Mammary epithelial cell (primary cell): ENCODE measurements at regions of chr1 and their contacts with region 1.

Region 1: DNA sequence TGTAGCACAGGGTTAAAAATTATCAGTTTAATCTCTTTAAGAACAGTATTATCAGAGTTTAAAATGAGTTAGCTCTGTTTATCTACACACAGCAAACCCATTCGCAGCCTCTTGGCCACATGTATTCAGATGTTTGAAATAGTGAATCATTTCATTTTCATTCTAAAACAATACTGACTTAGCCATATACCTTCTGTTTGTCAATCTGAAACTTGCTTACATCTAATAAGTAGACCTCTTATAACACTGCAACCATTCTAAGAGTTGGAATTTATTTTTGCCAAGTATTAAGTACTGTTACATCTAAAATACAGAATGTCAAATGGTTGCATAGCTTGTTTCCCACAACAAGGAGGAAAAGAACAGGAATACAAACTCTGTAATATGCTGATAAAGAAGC is 25.4 kb downstream of the ANGEL2 start:
- DNase-seq: no peak
- H3K4me3 ChIP-seq: no peak overlapping the region
- H3K27ac ChIP-seq: no peak overlapping the region
- H3K4me1 ChIP-seq: peaks cover 4% of the 10 kb centered on the region
- H3K27me3 ChIP-seq: no peaks in the 10 kb centered on the region
- CTCF ChIP-seq: no peak

Region 2: DNA sequence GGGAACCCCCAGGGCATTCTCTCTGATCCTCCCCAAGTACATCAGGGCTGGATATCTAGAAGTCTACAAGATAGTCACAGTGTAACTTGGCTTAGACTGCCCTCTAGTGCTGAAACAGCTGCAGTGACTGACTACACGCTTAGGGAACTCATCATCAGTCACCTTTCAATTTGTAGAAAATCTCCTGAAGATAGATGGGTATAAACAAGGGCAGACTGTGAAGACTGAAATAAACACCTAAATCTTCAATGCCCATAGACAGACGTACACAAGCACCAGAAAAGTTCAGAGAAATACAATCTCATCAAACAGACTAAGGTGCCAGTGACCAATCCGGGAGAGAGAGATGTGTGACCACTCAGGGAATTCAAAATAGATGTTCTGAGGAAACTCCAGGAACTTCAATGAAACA is 622.2 kb before region 1 on chr1:
- CTCF ChIA-PET with region 1: no interaction called
- dilution Hi-C with region 1: no loop called
- in situ Hi-C with region 1: no loop called
- intact Hi-C with region 1: loop called (anchors 5 kb)
- DNase-seq: peak; percentile 54
- H3K4me3 ChIP-seq: no peak overlapping the region
- H3K27ac ChIP-seq: no peak overlapping the region
- H3K4me1 ChIP-seq: no peaks in the 10 kb centered on the region
- H3K27me3 ChIP-seq: no peaks in the 10 kb centered on the region
- CTCF ChIP-seq: peak; percentile 90 to 96

Region 3: GRCh38 chr1:212630158-212630900 is 359.9 kb before region 1 on chr1:
- CTCF ChIA-PET with region 1: no interaction called
- dilution Hi-C with region 1: no loop called
- in situ Hi-C with region 1: no loop called
- intact Hi-C with region 1: loop called (anchors 5 kb)
- DNase-seq: no peak
- H3K4me3 ChIP-seq: no peak overlapping the region
- H3K27ac ChIP-seq: no peak overlapping the region
- H3K4me1 ChIP-seq: no peaks in the 10 kb centered on the region
- H3K27me3 ChIP-seq: no peaks in the 10 kb centered on the region
- CTCF ChIP-seq: peak; percentile 77 to 82

Region 4: GRCh38 chr1:212683357-212683722 is 306.9 kb before region 1 on chr1:
- CTCF ChIA-PET with region 1: no interaction called
- dilution Hi-C with region 1: no loop called
- in situ Hi-C with region 1: no loop called
- intact Hi-C with region 1: no loop called
- DNase-seq: no peak
- H3K4me3 ChIP-seq: no peak overlapping the region
- H3K27ac ChIP-seq: no peak overlapping the region
- H3K4me1 ChIP-seq: no peaks in the 10 kb centered on the region
- H3K27me3 ChIP-seq: no peaks in the 10 kb centered on the region
- CTCF ChIP-seq: no peak

Region 5: GRCh38 chr1:212749821-212750535 is 240.3 kb before region 1 on chr1:
- CTCF ChIA-PET with region 1: no interaction called
- dilution Hi-C with region 1: no loop called
- in situ Hi-C with region 1: no loop called
- intact Hi-C with region 1: loop called (anchors 1 kb)
- DNase-seq: peak; percentile 59
- H3K4me3 ChIP-seq: no peak overlapping the region
- H3K27ac ChIP-seq: no peak overlapping the region
- H3K4me1 ChIP-seq: peaks cover 3% of the 10 kb centered on the region
- H3K27me3 ChIP-seq: no peaks in the 10 kb centered on the region
- CTCF ChIP-seq: peak; percentile 74 to 80

Region 6: GRCh38 chr1:212791676-212792395 is 198.4 kb before region 1 on chr1 and contains the starts of genes NSL1 and TATDN3:
- CTCF ChIA-PET with region 1: no interaction called
- dilution Hi-C with region 1: no loop called
- in situ Hi-C with region 1: no loop called
- intact Hi-C with region 1: loop called (anchors 2 kb)
- DNase-seq: peak; percentile 90
- H3K4me3 ChIP-seq: peak within 1 kb of the TSS; percentile 92 to 97 (median 95)
- H3K27ac ChIP-seq: peak within 1 kb of the TSS; percentile 70
- H3K4me1 ChIP-seq: peaks cover 4% of the 10 kb centered on the region
- H3K27me3 ChIP-seq: no peaks in the 10 kb centered on the region
- CTCF ChIP-seq: no peak
- total RNA-seq, gene NSL1: 14.0 to 21.1 TPM
- total RNA-seq, gene TATDN3: 15.3 to 18.4 TPM

Region 7: GRCh38 chr1:212847549-212847948 is 142.7 kb before region 1 on chr1 and contains the start of gene SPATA45:
- CTCF ChIA-PET with region 1: no interaction called
- dilution Hi-C with region 1: no loop called
- in situ Hi-C with region 1: no loop called
- intact Hi-C with region 1: no loop called
- DNase-seq: no peak
- H3K4me3 ChIP-seq: no peak within 1 kb of the TSS
- H3K27ac ChIP-seq: no peak within 1 kb of the TSS
- H3K4me1 ChIP-seq: no peaks in the 10 kb centered on the region
- H3K27me3 ChIP-seq: no peaks in the 10 kb centered on the region
- CTCF ChIP-seq: no peak
- total RNA-seq, gene SPATA45: not detected